Motor neuron (in vitro differentiated cells): ENCODE measurements at regions of chr17 and their contacts with region 1.

Region 1: GRCh38 chr17:78289802-78290363 is 58.5 kb downstream of the TMEM235 start:
- ATAC-seq: peak; percentile 84 to 100 (median 97)
- H3K4me3 ChIP-seq: no peak overlapping the region
- H3K27ac ChIP-seq: no peak overlapping the region
- H3K4me1 ChIP-seq: no peaks in the 10 kb centered on the region

Region 2: GRCh38 chr17:78421484-78422266 is 131.8 kb after region 1 on chr17:
- in situ Hi-C with region 1: loop called in 1 of 9 experiments (anchors 10 kb)
- ATAC-seq: peak; percentile 20 to 88 (median 70)
- H3K4me3 ChIP-seq: no peak overlapping the region
- H3K27ac ChIP-seq: no peak overlapping the region
- H3K4me1 ChIP-seq: peaks cover 0 to 3% of the 10 kb centered on the region in 2 donors